ENCODE measurements at regions of chr17 and their contacts with region 1.

Region 1: DNA sequence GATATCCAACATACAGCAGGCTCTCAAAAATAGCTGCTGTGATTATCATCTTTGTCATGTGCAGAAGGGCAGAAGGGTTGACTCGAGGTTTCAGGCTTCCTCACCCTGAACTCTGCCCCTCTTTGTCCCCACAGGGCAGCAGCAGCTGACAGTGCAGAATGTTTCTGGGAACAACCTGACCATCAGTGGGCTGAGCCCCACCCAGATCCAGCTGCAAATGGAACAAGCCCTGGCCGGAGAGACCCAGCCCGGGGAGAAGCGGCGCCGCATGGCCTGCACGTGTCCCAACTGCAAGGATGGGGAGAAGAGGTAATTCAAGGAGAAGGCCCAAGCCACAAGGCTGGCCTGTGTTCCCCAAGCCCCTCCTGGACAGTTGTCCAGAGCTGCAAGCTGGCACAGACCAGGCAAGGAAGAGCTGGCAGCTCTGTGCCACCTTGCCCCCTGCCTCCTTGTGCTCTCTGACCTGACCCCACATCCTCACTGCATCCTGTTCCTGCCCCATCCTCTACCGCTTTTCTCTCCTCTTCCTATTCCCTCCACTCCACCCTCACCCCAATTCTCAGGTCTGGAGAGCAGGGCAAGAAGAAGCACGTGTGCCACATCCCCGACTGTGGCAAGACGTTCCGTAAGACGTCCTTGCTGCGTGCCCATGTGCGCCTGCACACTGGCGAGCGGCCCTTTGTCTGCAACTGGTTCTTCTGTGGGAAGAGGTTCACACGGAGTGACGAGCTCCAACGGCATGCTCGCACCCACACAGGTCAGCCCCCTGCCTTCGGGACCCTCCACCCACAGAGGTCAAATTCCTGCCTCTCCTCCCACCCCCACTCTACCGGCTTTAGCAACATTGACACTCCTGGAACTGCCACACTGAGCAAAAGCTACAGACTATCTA is 16.3 kb upstream of the PNPO start:
- DNase-seq: no peak
- ATAC-seq: peak; percentile 40

Region 2: GRCh38 chr17:47106130-47106529 is 818.9 kb before region 1 on chr17:
- intact Hi-C with region 1: loop called (anchors 5 kb)
- DNase-seq: no peak
- ATAC-seq: no peak

Region 3: DNA sequence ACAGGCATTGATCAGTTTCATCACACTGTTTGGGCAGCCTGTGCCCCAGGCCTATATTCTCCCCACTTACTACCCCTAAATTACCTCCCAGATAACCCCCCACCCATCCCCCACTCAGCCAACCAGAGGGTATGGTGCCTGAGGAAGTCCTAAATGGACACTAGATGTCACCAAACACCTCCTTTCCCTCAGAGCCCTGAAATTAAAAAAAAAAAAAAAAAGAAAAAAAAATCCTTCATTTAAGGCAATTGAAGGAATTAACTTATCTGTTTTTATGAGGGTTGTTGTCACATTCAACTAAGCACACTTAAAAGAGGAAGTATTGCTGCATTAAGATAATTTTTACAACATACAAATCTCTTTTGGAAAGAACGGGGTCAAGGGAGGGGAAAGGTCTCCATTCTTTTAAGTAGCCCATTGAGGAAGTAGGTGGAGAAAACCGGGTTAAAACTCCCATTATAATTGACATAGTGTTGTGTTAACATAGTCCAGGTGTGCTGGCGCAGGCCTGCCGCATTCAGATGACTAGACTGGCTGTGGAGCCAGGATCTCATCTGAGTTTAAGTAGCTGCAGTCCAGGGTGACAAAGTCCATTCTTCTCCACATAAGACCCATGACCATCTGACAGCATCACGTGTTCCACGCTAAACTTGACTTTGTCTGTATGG is 228.8 kb after region 1 on chr17:
- intact Hi-C with region 1: no loop called
- DNase-seq: no peak
- ATAC-seq: no peak

Measured in sciatic nerve (tissue), 2 donors.